ENCODE measurements at regions of chrX and their contacts with region 1.

Region 1: GRCh38 chrX:2640275-2641150 is 50.6 kb upstream of the CD99 start:
- DNase-seq: no peak
- ATAC-seq: no peak
- H3K4me3 ChIP-seq: no peak overlapping the region
- H3K27ac ChIP-seq: no peak overlapping the region
- H3K4me1 ChIP-seq: no peaks in the 10 kb centered on the region
- H3K27me3 ChIP-seq: no peaks in the 10 kb centered on the region
- CTCF ChIP-seq: no peak

Region 2: DNA sequence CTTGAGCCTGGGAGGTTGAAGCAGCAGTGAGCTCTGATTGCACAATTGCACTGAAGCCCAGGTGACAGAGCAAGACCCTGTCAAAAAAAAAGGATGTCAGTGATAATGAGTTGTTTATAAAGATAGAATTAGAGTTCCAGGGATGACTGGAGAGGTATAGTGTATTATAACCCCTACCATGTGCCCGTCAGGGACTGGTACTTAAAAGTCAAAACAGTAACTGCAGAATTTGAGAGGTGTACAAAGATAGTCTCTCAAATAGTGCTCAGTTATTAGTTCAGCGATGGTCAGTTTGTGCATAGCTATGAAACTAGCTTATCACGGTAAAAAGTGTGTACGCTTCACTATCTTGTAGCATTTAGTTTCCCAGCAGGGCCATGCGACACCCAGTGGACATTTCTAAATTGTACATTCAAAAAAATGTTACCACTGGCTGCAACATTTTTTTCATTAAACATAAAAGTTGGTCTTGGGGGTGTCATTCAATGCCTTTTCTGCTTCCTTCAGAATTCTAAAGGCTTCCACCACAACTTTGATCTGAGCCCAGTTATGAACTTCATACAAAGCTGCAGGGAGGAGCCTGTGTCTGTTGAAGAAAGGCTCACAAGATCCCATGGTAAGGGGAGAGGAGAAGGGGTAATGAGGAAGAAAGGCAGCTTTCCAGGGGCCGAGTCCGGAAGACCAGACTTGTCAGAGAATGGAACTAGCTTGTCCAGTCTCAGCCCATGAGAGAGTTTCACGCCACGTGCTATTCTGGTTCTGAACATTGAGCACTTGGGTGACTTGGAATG is 179.0 kb after region 1 on chrX:
- intact Hi-C with region 1: loop called in 7 of 10 experiments (anchors 5 to 10 kb)
- DNase-seq: no peak
- ATAC-seq: no peak
- H3K4me3 ChIP-seq: no peak overlapping the region
- H3K27ac ChIP-seq: no peak overlapping the region
- H3K4me1 ChIP-seq: no peaks in the 10 kb centered on the region
- H3K27me3 ChIP-seq: peaks cover 0 to 27% (median 0%) of the 10 kb centered on the region in 7 donors
- CTCF ChIP-seq: peak in 8 of 9 donors; percentile 13 to 59 (median 48)